Naive thymus-derived CD4-positive, alpha-beta T cell (primary cell): ENCODE measurements at regions of chr11 and their contacts with region 1.

Region 1: GRCh38 chr11:47186076-47186936 is at the start of gene PACSIN3:
- DNase-seq: peak in 6 of 9 donors; percentile 22 to 66 (median 32)
- ATAC-seq: peak; percentile 75
- H3K4me3 ChIP-seq: peak within 1 kb of the TSS; percentile 54
- H3K4me3 Mint-ChIP-seq: peak within 1 kb of the TSS; percentile 79 to 89 (median 82)
- H3K27ac ChIP-seq: no peak within 1 kb of the TSS
- H3K27ac Mint-ChIP-seq: peak within 1 kb of the TSS in 4 of 9 donors; percentile 17 to 83 (median 27)
- H3K4me1 ChIP-seq: peaks cover 7 to 12% of the 10 kb centered on the region in 2 donors
- H3K4me1 Mint-ChIP-seq: peaks cover 0 to 9% (median 5%) of the 10 kb centered on the region in 7 donors
- H3K27me3 ChIP-seq: peaks cover 0 to 14% of the 10 kb centered on the region in 2 donors
- H3K27me3 Mint-ChIP-seq: peaks cover 4 to 44% (median 13%) of the 10 kb centered on the region in 5 donors
- total RNA-seq, gene PACSIN3: 0.34 to 4.3 TPM in 2 of 5 experiments, not detected in the others

Region 2: GRCh38 chr11:47233989-47234668 is 47.8 kb after region 1 on chr11:
- CTCF ChIA-PET with region 1: no interaction called
- POLR2A ChIA-PET with region 1: interaction called, 4 read pairs
- intact Hi-C with region 1: loop called in 1 of 2 experiments (anchors 1 kb)
- DNase-seq: peak in 6 of 9 donors; percentile 17 to 46 (median 32)
- ATAC-seq: peak; percentile 8
- H3K4me3 ChIP-seq: peak overlapping the region; percentile 38
- H3K4me3 Mint-ChIP-seq: peak overlapping the region; percentile 35 to 90 (median 80)
- H3K27ac ChIP-seq: peak overlapping the region; percentile 81
- H3K27ac Mint-ChIP-seq: peak overlapping the region; percentile 77 to 99 (median 94)
- H3K4me1 ChIP-seq: peaks cover 5 to 13% of the 10 kb centered on the region in 2 donors
- H3K4me1 Mint-ChIP-seq: peaks cover 11 to 34% (median 30%) of the 10 kb centered on the region in 7 donors
- H3K27me3 ChIP-seq: no peaks in the 10 kb centered on the region
- H3K27me3 Mint-ChIP-seq: no peaks in the 10 kb centered on the region